GM12878 (cell line): ENCODE measurements at regions of chr15 and their contacts with region 1.

Region 1: GRCh38 chr15:58070801-58071418 is 5.4 kb upstream of the ALDH1A2 start:
- DNase-seq: no peak
- ATAC-seq: peak; percentile 48; the same call in 2 of the 3 replicates
- H3K4me3 ChIP-seq: no peak overlapping the region
- H3K27ac ChIP-seq: no peak overlapping the region
- H3K4me1 ChIP-seq: no peaks in the 10 kb centered on the region
- H3K27me3 ChIP-seq: peaks cover 2 to 5% of the 10 kb centered on the region in 2 experiments; a peak in 3 of 4 replicates
- CTCF ChIP-seq: peak; percentile 59 to 86 (median 80)
- EP300 ChIP-seq: no peak
- POLR2A ChIP-seq: no peak
- RAD21 ChIP-seq: peak; percentile 68

Region 2: GRCh38 chr15:57472861-57473260 is 598.0 kb before region 1 on chr15:
- CTCF ChIA-PET with region 1: no interaction called
- POLR2A ChIA-PET with region 1: no interaction called
- RAD21 ChIA-PET with region 1: no interaction called
- SMC1A ChIA-PET with region 1: no interaction called
- in situ Hi-C with region 1: no loop called
- intact Hi-C with region 1: no loop called
- DNase-seq: no peak
- ATAC-seq: no peak
- H3K4me3 ChIP-seq: no peak overlapping the region
- H3K27ac ChIP-seq: no peak overlapping the region
- H3K4me1 ChIP-seq: no peaks in the 10 kb centered on the region
- H3K27me3 ChIP-seq: no peaks in the 10 kb centered on the region; a peak in 1 of 4 replicates
- CTCF ChIP-seq: no peak
- EP300 ChIP-seq: no peak
- POLR2A ChIP-seq: no peak
- RAD21 ChIP-seq: no peak

Region 3: DNA sequence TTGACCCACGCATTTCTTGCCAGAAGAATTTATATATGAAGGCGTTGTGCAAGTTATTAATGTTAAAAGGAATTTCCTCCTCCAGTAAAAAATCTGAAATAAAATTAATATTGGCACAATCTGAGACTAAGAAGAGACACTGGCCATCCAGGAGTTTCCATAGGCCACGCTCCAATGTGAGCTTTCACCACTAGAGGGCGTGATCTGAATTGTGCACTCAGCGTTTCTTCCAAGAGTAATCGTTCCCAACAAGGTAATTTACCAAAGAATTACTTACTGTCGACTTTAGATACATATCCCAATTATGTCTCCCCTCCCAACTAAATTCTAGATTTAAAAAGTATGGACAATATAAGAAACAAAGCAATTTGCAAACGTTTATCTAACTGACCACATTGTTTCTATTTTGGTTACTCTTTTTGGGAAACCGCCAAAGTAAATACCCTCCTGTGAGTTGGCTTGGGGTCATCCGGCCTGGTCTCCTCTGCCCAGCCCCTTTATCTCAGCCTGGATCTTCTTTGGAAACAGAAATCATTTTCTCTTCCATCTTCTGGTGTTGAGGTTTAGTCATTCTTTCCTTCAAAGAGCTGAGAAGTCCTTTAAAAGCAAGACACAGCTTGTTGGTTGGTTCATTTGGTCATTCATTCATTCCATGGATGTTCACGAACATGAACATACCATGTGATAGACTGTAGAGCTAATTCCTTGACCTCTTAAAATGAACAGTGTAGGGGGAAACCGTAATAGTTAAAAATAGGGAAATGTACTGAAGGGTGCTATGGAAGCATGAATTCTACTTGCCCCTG is 338.2 kb before region 1 on chr15:
- CTCF ChIA-PET with region 1: interaction called, 16 read pairs
- POLR2A ChIA-PET with region 1: no interaction called
- RAD21 ChIA-PET with region 1: interaction called, 3 read pairs
- SMC1A ChIA-PET with region 1: interaction called, 3 read pairs
- in situ Hi-C with region 1: no loop called
- intact Hi-C with region 1: no loop called
- DNase-seq: no peak
- ATAC-seq: peak; percentile 82
- H3K4me3 ChIP-seq: no peak overlapping the region
- H3K27ac ChIP-seq: no peak overlapping the region
- H3K4me1 ChIP-seq: no peaks in the 10 kb centered on the region
- H3K27me3 ChIP-seq: no peaks in the 10 kb centered on the region
- CTCF ChIP-seq: peak; percentile 67 to 95 (median 85)
- EP300 ChIP-seq: no peak
- POLR2A ChIP-seq: no peak
- RAD21 ChIP-seq: peak; percentile 39; the same call in 1 of the 2 replicates

Region 4: GRCh38 chr15:57751177-57751800 is 319.6 kb before region 1 on chr15:
- CTCF ChIA-PET with region 1: interaction called, 13 read pairs
- POLR2A ChIA-PET with region 1: no interaction called
- RAD21 ChIA-PET with region 1: no interaction called
- SMC1A ChIA-PET with region 1: no interaction called
- in situ Hi-C with region 1: no loop called
- intact Hi-C with region 1: loop called (anchors 10 kb)
- DNase-seq: no peak
- ATAC-seq: no peak
- H3K4me3 ChIP-seq: no peak overlapping the region
- H3K27ac ChIP-seq: no peak overlapping the region
- H3K4me1 ChIP-seq: no peaks in the 10 kb centered on the region
- H3K27me3 ChIP-seq: no peaks in the 10 kb centered on the region
- CTCF ChIP-seq: peak; percentile 35 to 47 (median 45); a peak in 5 of 6 replicates
- EP300 ChIP-seq: no peak
- POLR2A ChIP-seq: no peak
- RAD21 ChIP-seq: peak; percentile 62

Region 5: GRCh38 chr15:57866149-57866736 is 204.7 kb before region 1 on chr15:
- CTCF ChIA-PET with region 1: interaction called, 27 read pairs
- POLR2A ChIA-PET with region 1: interaction called, 3 read pairs
- RAD21 ChIA-PET with region 1: interaction called, 14 read pairs
- SMC1A ChIA-PET with region 1: interaction called, 6 read pairs
- in situ Hi-C with region 1: loop called (anchors 5 kb)
- intact Hi-C with region 1: loop called (anchors 1 kb)
- DNase-seq: no peak
- ATAC-seq: peak; percentile 79
- H3K4me3 ChIP-seq: no peak overlapping the region
- H3K27ac ChIP-seq: no peak overlapping the region
- H3K4me1 ChIP-seq: no peaks in the 10 kb centered on the region
- H3K27me3 ChIP-seq: no peaks in the 10 kb centered on the region
- CTCF ChIP-seq: peak; percentile 66 to 84 (median 74)
- EP300 ChIP-seq: no peak
- POLR2A ChIP-seq: no peak
- RAD21 ChIP-seq: peak; percentile 59

Region 6: GRCh38 chr15:58057559-58057958 is 13.4 kb before region 1 on chr15:
- CTCF ChIA-PET with region 1: interaction called, 10 read pairs
- POLR2A ChIA-PET with region 1: no interaction called
- RAD21 ChIA-PET with region 1: no interaction called
- SMC1A ChIA-PET with region 1: interaction called, 3 read pairs
- in situ Hi-C with region 1: no loop called
- intact Hi-C with region 1: no loop called
- DNase-seq: no peak
- ATAC-seq: no peak
- H3K4me3 ChIP-seq: no peak overlapping the region
- H3K27ac ChIP-seq: no peak overlapping the region
- H3K4me1 ChIP-seq: no peaks in the 10 kb centered on the region
- H3K27me3 ChIP-seq: no peaks in the 10 kb centered on the region; a peak in 1 of 4 replicates
- CTCF ChIP-seq: no peak
- EP300 ChIP-seq: no peak
- POLR2A ChIP-seq: no peak
- RAD21 ChIP-seq: no peak

Region 7: DNA sequence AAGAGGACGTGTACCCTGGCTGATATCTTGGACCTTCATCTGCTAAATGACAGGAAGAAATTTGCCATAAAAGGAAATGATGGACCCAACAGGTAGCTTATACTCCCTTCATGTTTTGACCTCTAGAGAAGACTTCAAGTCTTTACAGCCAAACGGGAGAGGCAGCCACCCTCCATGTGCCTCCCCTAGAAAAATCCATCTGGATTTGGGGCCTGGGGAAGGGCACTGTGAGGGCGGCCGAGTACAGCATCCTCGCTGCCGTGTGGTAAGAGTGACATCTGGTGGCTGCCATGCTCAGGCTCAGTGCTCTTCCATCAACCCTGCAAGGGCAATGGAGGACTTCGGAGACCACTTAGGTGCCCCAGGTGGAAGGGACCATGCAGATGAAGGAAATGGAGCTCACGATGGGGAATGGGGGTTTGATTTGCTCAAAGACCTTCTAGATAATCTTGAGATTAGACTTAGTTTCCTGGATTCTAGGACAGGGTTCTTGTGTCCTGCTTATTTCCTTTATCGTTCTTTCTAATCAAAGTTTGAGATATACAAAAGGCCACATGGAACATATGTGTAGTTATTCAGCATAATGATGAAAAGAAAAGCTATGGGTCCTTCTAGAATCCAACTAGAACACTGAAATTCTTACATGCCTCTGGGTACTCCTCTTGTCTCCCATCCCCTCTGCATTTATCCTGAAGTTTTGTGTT is 111.7 kb after region 1 on chr15:
- CTCF ChIA-PET with region 1: interaction called, 15 read pairs
- POLR2A ChIA-PET with region 1: no interaction called
- RAD21 ChIA-PET with region 1: interaction called, 3 read pairs
- SMC1A ChIA-PET with region 1: interaction called, 5 read pairs
- in situ Hi-C with region 1: no loop called
- intact Hi-C with region 1: no loop called
- DNase-seq: no peak
- ATAC-seq: peak; percentile 94
- H3K4me3 ChIP-seq: no peak overlapping the region
- H3K27ac ChIP-seq: no peak overlapping the region
- H3K4me1 ChIP-seq: no peaks in the 10 kb centered on the region
- H3K27me3 ChIP-seq: no peaks in the 10 kb centered on the region
- CTCF ChIP-seq: peak; percentile 79 to 88 (median 80); a peak in 5 of 6 replicates
- EP300 ChIP-seq: no peak
- POLR2A ChIP-seq: no peak
- RAD21 ChIP-seq: peak; percentile 80